ENCODE measurements at regions of chr10 and their contacts with region 1.

Region 1: GRCh38 chr10:103800789-103801540 is 54.4 kb downstream of the SH3PXD2A start:
- DNase-seq: peak; percentile 76
- H3K4me3 Mint-ChIP-seq: no peak overlapping the region
- H3K27ac Mint-ChIP-seq: peak overlapping the region; percentile 35
- H3K4me1 Mint-ChIP-seq: peaks cover 21% of the 10 kb centered on the region
- H3K27me3 Mint-ChIP-seq: no peaks in the 10 kb centered on the region

Region 2: GRCh38 chr10:103765981-103766380 is 35.0 kb before region 1 on chr10:
- CTCF ChIA-PET with region 1: no interaction called
- POLR2A ChIA-PET with region 1: no interaction called
- intact Hi-C with region 1: loop called (anchors 5 kb)
- DNase-seq: peak; percentile 89
- H3K4me3 Mint-ChIP-seq: no peak overlapping the region
- H3K27ac Mint-ChIP-seq: peak overlapping the region; percentile 15
- H3K4me1 Mint-ChIP-seq: peaks cover 57% of the 10 kb centered on the region
- H3K27me3 Mint-ChIP-seq: no peaks in the 10 kb centered on the region

Region 3: DNA sequence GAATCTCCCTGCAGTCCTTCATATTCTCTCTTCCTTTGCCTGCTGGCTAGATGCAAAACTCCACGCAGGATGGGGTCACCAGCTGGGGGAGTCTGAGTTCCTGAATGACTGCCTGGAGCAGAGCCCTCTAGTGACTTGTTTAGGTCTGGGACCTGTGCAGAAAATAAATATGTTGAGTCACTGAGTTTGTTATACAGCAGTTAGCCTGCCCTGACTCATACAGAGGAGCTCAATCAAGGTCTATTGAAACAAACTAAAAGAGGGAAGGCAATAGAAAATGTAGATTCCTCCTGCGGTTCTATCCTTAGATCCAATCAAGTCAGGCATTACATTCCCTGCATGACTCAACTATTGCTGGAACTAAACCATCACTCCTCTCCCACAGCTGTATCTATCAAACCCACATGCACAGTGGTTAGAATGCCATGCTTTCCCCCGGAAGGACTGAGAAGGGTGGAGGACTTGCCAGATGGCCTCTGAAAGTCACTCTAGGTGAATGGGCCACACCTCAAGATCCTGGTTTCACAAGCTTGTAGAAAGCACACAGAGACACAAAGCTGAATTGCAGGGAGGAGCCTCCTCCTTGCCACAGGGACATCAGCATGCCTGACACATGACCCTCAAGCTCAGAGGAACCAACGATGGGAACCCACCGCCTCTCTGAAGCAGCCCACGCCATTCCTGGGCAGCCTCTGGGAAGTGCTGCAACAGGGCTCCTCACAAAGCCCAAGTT is 19.5 kb before region 1 on chr10:
- CTCF ChIA-PET with region 1: no interaction called
- POLR2A ChIA-PET with region 1: no interaction called
- intact Hi-C with region 1: no loop called
- DNase-seq: peak; percentile 36
- H3K4me3 Mint-ChIP-seq: no peak overlapping the region
- H3K27ac Mint-ChIP-seq: no peak overlapping the region
- H3K4me1 Mint-ChIP-seq: peaks cover 16% of the 10 kb centered on the region
- H3K27me3 Mint-ChIP-seq: peaks cover 5% of the 10 kb centered on the region

Region 4: GRCh38 chr10:103859161-103860086 is 58.5 kb after region 1 on chr10:
- CTCF ChIA-PET with region 1: no interaction called
- POLR2A ChIA-PET with region 1: no interaction called
- intact Hi-C with region 1: loop called (anchors 5 kb)
- DNase-seq: peak; percentile 74
- H3K4me3 Mint-ChIP-seq: no peak overlapping the region
- H3K27ac Mint-ChIP-seq: no peak overlapping the region
- H3K4me1 Mint-ChIP-seq: peaks cover 10% of the 10 kb centered on the region
- H3K27me3 Mint-ChIP-seq: peaks cover 15% of the 10 kb centered on the region